Aorta (tissue), 5 donors: ENCODE measurements at regions of chr19 and their contacts with region 1.

Region 1: DNA sequence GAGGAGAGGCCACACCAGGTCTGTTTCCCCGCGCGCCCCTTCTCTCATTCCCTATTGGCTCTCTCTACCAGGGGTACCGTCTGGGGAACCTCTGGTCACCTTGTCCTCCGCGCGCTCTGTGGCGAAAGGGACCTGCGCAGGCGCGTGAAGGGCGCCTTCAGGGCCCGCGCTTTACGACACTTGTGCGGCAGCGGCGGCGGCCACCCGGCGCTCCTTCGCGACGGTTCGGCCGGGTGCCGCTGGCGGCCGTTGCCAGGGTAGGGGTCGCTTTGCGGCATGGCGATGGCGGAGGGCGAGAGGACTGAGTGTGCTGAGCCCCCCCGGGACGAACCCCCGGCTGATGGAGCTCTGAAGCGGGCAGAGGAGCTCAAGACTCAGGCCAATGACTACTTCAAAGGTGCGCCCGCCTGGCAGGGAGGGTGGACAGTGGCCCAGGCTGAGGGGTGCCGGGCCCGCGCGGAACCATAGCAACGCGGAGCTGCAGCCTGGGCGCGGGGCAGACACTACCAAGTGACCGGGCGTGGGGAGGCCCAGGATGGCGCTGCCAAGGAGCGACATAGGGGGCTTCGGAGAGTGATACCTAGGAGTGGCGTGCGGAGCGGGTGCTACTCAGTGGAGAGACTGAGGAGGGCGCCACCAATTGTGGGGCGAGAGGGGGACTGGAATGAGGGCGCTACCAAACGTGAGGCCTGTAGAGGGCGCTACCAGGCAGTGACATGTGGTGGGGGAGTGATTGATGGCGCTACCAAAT is at the start of gene PPP5C:
- DNase-seq: peak; percentile 94 to 97
- ATAC-seq: peak; percentile 90
- H3K4me3 ChIP-seq: peak within 1 kb of the TSS; percentile 63 to 69
- H3K27ac ChIP-seq: peak within 1 kb of the TSS in 1 of 2 donors; percentile 29
- H3K4me1 ChIP-seq: peaks cover under 1 to 3% of the 10 kb centered on the region in 2 donors
- H3K27me3 ChIP-seq: no peaks in the 10 kb centered on the region
- total RNA-seq, gene PPP5C: 62.7 to 63.7 TPM

Region 2: DNA sequence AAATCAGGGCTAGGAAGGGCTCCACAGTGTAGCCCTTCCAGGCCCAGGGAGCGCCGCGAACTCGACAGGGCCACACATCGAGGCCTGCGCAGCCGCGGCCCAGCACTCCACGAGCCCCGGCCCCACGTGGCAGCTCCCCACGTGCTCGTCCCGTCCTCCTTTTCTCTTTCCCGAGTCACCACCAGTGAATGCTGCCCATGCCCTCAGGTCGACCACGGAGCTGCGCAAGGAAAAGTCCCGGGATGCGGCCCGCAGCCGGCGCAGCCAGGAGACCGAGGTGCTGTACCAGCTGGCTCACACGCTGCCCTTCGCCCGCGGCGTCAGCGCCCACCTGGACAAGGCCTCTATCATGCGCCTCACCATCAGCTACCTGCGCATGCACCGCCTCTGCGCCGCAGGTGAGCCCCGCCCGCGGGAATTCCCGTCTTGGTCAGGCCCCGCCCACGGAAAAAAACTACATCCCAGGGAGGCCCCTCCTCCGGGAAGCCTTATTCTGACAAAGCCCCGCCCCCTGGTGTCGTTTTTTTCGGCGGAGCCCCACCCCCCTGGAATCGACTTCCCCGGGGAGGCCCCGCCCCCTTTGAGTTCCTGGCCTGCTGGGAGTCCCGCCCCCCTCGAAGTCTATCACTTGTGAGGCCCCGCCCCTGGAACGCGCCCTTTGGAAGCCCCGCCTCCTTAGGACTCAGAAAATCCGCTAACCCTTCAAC is 43.2 kb before region 1 on chr19:
- intact Hi-C with region 1: loop called (anchors 5 kb)
- DNase-seq: peak in 1 of 2 donors; percentile 50
- ATAC-seq: no peak
- H3K4me3 ChIP-seq: no peak overlapping the region
- H3K27ac ChIP-seq: no peak overlapping the region
- H3K4me1 ChIP-seq: peaks cover 0 to 3% of the 10 kb centered on the region in 2 donors
- H3K27me3 ChIP-seq: no peaks in the 10 kb centered on the region